ENCODE measurements at regions of chr7 and their contacts with region 1.

Region 1: DNA sequence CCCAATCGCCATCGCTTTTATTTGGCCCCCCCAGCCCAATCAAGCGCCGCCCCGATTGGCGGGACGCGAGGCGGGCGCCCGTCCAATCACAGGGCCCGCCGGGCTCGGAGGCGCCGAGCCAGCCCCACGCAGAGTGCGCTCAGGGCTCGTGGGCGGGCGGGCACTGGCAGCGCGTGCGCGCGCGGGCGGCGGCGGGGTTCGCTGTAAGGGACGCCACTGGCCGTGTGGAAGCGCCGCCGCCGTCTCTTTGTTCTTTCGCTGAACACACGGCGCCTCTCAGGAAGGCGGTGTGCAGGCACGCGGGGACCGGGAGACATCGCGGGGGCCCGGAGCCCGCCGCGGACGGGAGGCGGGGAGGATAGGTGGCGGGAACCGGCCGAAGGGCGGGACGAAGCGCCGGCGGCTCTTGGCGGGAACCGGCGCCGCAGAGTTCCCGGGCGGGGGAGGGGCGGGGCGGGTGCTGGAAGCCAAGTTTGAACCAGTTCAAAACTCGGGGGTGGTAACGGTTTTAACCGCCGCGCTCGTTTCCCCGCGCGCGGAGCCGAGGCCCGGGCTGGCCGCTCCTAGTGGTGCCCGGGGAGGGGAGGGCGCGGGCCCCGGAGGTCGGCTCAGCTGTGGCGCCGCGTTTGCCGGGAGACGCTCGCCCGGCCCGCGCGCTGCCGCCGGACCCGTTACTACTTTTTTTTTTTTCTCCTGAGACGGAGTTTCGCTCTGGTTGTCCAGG is 370 bp upstream of the EZH2 start:
- DNase-seq: peak; percentile 94
- H3K4me3 Mint-ChIP-seq: peak overlapping the region; percentile 88
- H3K27ac Mint-ChIP-seq: peak overlapping the region; percentile 98
- H3K4me1 Mint-ChIP-seq: peaks cover 44% of the 10 kb centered on the region
- H3K27me3 Mint-ChIP-seq: no peaks in the 10 kb centered on the region

Region 2: GRCh38 chr7:148722340-148723165 is 161.9 kb before region 1 on chr7:
- CTCF ChIA-PET with region 1: no interaction called
- DNase-seq: no peak
- H3K4me3 Mint-ChIP-seq: no peak overlapping the region
- H3K27ac Mint-ChIP-seq: no peak overlapping the region
- H3K4me1 Mint-ChIP-seq: peaks cover 55% of the 10 kb centered on the region
- H3K27me3 Mint-ChIP-seq: no peaks in the 10 kb centered on the region

Region 3: DNA sequence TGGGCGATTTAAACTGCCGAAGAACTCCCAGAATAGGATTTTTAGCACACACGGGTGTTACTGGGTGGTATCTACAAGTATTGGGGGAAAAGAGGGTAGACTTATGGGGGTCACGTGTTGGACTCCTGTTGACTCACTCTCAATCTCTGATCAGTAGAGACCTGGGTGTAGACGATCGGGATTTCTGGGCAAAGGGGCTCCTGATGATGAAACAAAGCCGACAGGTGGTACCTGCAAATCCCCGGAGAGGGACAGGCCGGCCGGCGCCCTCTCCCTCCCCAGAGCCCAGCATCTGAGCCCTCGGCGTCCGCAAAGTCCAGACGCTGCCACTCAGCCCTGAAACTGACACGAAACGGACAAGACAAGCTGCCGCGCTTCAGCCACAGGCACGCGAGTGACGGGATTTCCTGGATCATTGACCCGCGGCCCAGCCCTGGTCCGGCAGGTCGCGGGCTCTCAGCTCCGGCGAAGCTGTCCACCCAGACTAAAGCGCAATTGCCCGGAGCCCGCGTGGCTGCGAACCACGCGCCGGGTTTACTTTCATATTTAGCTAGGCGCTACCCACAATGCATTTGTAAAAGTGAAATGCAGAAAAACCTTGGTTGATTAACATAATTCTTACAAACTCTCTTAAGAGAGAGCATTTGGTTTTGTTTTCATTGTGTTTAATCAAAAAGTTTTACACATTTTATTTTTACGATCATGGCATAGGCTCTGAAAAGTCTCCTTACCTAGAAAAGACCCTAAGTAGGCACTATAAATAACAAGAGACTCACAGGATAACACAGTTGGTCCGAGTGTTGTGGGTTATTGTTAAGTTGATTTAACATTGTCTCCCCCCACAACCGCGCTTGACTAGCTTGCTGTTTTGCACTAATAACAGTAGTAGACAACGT is 56.5 kb after region 1 on chr7:
- CTCF ChIA-PET with region 1: interaction called, 13 read pairs
- DNase-seq: peak; percentile 82
- H3K4me3 Mint-ChIP-seq: peak overlapping the region; percentile 85
- H3K27ac Mint-ChIP-seq: peak overlapping the region; percentile 99
- H3K4me1 Mint-ChIP-seq: peaks cover 30% of the 10 kb centered on the region
- H3K27me3 Mint-ChIP-seq: no peaks in the 10 kb centered on the region

Measured in activated naive CD4-positive, alpha-beta T cell treated with anti-CD3 and anti-CD28 coated beads, Interleukin-2, amount 10 ng/mL, durations not matched to agents 7 days and 5 days (primary cell).